ENCODE measurements at regions of chr2 and their contacts with region 1.

Region 1: DNA sequence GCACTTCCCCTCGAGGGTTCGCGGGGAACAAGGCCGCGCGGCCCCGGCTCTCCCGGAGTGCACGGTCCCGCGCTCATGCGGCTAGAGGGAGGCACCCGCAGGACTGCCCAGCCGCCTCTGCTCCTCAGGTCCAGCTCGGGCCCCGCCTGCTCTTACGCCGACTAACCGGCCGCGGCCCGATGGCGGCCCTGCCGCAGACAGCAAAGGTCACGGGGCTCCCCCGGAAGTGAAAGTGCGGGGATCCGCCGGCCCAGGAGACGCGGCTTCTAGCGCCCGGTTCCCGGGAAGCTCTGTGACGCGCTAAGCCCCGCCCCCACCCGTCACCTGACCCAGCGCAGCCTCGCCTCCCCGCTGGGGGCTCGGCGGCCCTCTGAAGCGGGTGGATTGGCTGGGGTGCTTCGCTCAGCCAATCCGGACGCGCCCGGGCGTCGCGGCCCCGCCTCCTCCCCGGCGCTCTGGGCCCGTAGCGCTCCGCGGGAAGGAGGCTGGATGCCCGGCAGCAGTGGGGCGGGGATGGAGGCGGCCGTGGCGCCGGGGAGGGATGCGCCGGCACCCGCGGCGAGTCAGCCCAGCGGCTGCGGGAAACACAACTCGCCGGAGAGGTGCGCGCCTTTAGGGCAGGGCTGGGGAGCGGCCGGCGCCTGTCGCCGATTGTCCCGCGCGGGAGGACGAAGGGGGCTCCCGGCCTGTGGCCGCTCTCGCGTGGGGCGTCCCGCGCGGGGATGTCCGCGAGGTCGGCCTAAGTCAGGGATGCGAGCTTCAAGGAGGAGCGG is at the start of gene SCLY:
- DNase-seq: peak; percentile 93
- H3K4me3 Mint-ChIP-seq: peak within 1 kb of the TSS; percentile 90
- H3K27ac Mint-ChIP-seq: peak within 1 kb of the TSS; percentile 91
- H3K4me1 Mint-ChIP-seq: peaks cover 62% of the 10 kb centered on the region
- H3K27me3 Mint-ChIP-seq: peaks cover 7% of the 10 kb centered on the region
- total RNA-seq, gene SCLY: 109 and 119 TPM in 2 replicates

Region 2: DNA sequence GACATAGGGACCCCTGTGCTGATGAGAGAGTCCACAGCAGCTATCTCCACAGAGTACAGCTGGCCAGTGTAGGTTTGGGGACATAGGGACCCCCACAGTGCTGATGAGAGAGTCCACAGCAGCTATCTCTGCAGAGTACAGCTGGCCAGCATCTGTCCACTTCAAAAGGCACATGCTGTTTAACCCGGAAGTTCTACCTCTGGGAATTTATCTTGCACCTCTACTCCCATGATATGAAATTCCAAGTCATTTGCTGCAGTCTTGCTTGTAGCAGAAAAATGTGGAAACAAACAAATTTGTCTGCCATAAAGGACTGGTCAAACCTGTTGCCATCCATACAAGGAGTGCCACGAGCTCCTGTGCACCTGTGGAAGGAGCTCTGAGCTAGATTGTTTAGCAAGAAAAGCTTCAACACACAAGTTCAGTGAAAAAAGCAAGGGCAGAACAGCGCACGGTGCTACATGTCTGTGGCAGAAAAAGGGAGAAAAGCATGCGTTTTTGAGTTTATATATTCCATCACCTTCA is 400.3 kb before region 1 on chr2:
- intact Hi-C with region 1: no loop called
- DNase-seq: no peak
- H3K4me3 Mint-ChIP-seq: no peak overlapping the region
- H3K27ac Mint-ChIP-seq: no peak overlapping the region
- H3K4me1 Mint-ChIP-seq: peaks cover 7% of the 10 kb centered on the region
- H3K27me3 Mint-ChIP-seq: peaks cover 27% of the 10 kb centered on the region

Region 3: DNA sequence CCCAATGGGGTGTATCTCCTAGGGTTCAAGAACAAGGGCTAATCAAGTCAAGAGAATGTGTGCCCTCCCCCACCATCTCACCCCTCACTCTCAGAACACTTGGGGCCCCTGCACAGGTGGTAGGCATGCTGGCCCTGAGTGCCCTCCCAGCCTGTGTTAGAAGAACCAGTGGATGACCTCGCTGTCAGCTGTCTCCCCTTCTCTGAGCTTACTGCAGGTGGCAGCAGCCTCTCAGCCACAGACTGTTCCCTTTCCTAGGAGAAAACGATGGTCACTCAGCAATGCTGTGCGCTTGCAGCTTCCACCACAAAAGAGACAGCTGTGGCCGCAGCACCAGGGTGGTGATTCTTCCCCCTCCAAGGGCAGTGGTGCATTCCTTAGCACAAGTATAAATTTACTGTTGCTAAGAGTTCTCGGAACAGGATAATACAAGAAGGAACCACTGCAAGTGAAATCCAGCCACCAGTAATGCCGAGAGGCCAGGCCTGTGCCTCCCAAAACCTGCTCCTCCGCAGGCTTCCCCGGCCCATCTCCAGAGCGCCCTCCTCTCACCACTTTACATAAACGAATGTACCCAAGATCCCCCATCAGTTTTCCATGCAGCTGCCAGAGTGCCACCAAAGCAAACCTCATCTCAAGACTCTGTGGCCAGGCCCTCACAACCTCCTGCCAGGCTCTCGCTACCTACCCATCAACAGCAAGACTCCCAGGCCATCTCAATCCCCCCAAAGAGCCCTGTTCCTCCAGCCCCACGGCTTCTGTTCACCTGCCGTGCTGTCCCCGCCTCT is 202.2 kb before region 1 on chr2:
- intact Hi-C with region 1: loop called (anchors 2 kb)
- DNase-seq: peak; percentile 39
- H3K4me3 Mint-ChIP-seq: peak overlapping the region; percentile 86
- H3K27ac Mint-ChIP-seq: peak overlapping the region; percentile 60
- H3K4me1 Mint-ChIP-seq: peaks cover 21% of the 10 kb centered on the region
- H3K27me3 Mint-ChIP-seq: peaks cover 53% of the 10 kb centered on the region

Region 4: GRCh38 chr2:237955640-237956401 is 104.9 kb before region 1 on chr2:
- intact Hi-C with region 1: no loop called
- DNase-seq: no peak
- H3K4me3 Mint-ChIP-seq: no peak overlapping the region
- H3K27ac Mint-ChIP-seq: no peak overlapping the region
- H3K4me1 Mint-ChIP-seq: peaks cover 4% of the 10 kb centered on the region
- H3K27me3 Mint-ChIP-seq: peaks cover 31% of the 10 kb centered on the region

Region 5: GRCh38 chr2:238024986-238025385 is 35.7 kb before region 1 on chr2:
- intact Hi-C with region 1: loop called (anchors 2 kb)
- DNase-seq: peak; percentile 19
- H3K4me3 Mint-ChIP-seq: peak overlapping the region; percentile 8
- H3K27ac Mint-ChIP-seq: peak overlapping the region; percentile 82
- H3K4me1 Mint-ChIP-seq: peaks cover 34% of the 10 kb centered on the region
- H3K27me3 Mint-ChIP-seq: no peaks in the 10 kb centered on the region

Region 6: GRCh38 chr2:238239872-238240751 is 179.4 kb after region 1 on chr2 and contains the start of gene HES6:
- intact Hi-C with region 1: loop called (anchors 1 kb)
- DNase-seq: peak; percentile 79
- H3K4me3 Mint-ChIP-seq: peak within 1 kb of the TSS; percentile 88
- H3K27ac Mint-ChIP-seq: no peak within 1 kb of the TSS
- H3K4me1 Mint-ChIP-seq: no peaks in the 10 kb centered on the region
- H3K27me3 Mint-ChIP-seq: peaks cover 37% of the 10 kb centered on the region
- total RNA-seq, gene HES6: 10.3 and 11.2 TPM in 2 replicates

Measured in activated T-helper 1 cell treated with anti-CD3 and anti-CD28 coated beads, Interleukin-12 subunit alpha, Interleukin-12 subunit beta, Interleukin-2, Interleukin-4 antibody, amounts not matched to agents 30 ng/mL and 10 ng/mL and 1 ng/mL, durations not matched to agents 14 hours and 24 hours and 36 hours (primary cell).